Left ventricle myocardium superior (tissue), 1 donor: ENCODE measurements at regions of chr2 and their contacts with region 1.

Region 1: DNA sequence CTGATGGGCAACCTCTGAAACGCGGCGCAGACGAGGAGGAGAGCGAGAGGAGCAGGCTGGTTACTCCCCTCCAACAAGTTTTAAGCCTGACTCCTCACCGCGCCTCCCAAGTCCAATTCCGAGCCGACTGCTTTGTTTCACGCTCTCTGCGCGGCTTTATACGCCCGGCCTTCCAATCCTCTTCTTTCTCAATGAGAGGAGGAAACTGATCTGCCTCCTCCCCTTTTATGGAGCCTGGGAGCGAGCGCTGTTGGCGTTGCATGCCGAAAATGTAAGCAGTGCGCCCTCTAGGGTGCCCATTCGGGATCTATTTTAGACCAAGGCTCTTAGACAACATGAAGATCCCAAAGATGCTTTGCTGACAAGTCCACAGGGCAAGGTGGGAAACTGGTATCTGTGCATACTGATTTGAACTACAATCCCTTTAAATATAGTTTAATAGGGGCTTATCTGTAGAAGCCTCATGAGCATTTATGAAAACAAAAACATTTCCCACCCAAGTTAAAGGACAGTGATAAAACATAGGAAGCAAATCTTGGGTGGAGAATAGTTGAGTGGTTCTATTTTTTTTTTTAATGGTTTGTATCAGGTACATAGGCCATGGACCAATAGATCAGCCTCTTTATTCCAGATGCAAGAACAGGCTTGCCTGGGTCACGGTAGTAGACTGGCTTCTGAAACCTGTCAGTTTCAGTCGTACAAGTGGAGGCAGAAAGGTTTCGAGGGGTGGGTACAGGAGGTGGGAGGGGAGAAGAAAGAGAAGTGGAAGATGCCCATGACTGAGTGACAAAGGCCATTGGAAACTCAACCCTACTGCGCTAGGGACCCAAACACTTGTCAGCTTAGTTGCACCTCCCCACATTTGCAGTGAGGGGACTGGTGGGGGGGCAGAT is at the start of gene RND3:
- DNase-seq: peak; percentile 96
- ATAC-seq: peak; percentile 66
- total RNA-seq, gene RND3: 25.1 TPM

Region 2: DNA sequence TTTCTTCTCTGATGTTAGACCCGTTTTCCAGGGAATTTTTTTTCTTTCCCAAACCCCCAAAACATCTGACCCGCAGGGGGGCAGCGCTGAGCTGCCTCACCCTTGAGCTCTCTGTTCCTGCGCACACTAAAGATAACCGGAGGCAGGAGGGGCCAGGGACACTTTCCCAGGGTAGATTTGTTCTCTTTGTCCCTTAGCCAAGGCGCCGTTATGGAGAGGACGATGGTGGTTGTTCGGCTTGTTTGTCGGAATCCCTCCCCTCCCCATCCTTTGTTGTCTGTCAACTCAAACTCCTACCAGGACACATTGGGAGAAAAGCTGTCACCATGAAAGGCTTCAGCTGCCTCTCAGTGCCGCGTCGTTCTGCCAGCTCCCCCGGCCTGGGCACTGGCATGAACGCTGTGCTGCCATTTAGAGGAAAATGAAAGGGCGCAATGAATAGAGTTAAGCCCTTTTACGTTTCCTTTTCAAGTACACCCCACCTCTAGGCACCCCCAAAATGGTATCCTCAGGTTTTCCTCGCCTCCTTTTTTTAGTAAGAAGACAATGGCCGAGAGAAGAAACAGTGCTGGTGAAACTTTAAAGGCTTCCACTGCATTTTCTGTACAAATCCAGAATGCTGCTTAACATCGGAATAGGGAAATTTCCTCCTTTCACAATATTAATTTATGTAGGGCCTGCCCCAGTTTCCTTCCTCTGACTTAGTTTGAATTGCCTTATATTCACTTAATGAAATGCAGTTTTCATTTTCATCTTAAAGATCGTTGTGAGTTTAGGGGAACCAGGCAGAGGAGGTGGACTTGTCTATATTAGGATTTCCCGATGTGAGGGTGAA is 62.4 kb before region 1 on chr2:
- intact Hi-C with region 1: loop called (anchors 2 kb)
- DNase-seq: peak; percentile 62
- ATAC-seq: peak; percentile 98